ENCODE measurements at regions of chr22 and their contacts with region 1.

Region 1: DNA sequence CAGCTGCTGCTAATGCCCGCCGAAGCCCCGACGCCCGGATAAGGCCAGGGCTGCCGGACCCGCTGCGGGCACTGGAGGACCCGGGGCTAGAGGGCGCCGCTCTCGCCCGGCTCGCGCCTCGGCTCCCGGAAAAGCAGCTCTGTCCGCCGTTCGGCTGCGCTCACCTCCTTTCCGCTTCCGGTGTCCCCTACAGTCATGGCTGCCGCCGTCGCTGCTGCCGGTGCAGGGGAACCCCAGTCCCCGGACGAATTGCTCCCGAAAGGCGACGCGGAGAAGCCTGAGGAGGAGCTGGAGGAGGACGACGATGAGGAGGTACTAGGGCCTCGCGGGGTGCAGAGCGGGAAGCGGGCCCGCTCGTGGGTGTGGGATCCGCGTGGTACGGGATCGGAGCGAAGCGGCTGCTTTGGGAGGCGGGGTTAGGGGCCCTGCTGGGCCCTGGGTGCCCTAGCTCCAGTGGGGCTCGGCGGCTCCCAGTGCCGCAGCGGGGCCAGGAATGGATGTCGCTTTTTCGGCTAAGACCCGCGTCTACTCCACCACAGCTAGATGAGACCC is at the start of gene TOMM22:
- DNase-seq: no peak
- H3K4me3 ChIP-seq: peak within 1 kb of the TSS; percentile 91
- H3K27me3 ChIP-seq: no peaks in the 10 kb centered on the region
- CTCF ChIP-seq: peak; percentile 71
- polyA plus RNA-seq, gene TOMM22: 29.6 and 53.3 TPM in 2 replicates

Region 2: DNA sequence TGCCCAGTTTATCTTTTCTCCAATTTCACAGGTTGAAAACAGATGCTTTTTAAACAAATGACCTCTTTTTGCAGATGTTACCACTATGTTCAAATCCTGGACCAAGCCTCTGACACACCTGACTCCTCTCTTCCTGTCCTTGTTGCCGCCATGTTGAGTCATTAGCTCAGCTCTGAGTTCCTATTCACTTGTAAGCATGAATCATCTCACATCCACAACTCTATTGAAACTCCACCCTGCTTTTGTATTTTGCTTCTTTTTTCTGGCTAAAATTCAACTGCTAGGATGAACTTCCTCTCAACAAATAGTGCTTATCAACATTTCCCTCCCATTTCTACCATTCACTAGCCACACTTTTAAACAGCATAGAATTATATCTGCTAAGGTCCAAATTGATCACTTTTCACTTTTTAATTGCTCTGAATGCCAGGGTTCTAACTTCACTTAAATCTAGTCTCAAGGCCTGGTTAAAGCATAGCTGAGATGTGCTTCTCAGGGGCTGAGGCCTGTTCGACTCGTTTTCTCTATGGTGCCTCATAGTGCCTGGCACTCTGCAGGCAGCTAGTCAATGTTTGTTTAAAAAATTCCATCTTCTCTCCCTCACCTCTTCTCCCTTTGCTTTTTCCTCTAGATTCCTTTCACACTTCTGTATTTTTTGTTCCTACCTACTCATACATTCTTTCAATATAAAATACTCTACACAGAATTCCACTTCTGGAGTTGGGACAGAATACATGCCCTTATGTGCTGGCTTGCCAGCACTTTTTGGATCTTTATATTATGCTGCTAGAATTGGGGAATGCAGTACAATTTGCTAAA is 15.0 kb after region 1 on chr22:
- CTCF ChIA-PET with region 1: interaction called, 18 read pairs
- POLR2A ChIA-PET with region 1: no interaction called
- DNase-seq: peak; percentile 55
- H3K4me3 ChIP-seq: no peak overlapping the region
- H3K27me3 ChIP-seq: no peaks in the 10 kb centered on the region
- CTCF ChIP-seq: no peak

Region 3: GRCh38 chr22:38705235-38706100 is 23.6 kb after region 1 on chr22 and contains the start of gene GTPBP1:
- CTCF ChIA-PET with region 1: interaction called, 14 read pairs
- POLR2A ChIA-PET with region 1: no interaction called
- DNase-seq: peak; percentile 100
- H3K4me3 ChIP-seq: peak within 1 kb of the TSS; percentile 92
- H3K27me3 ChIP-seq: no peaks in the 10 kb centered on the region
- CTCF ChIP-seq: peak; percentile 16; the same call in 1 of the 2 replicates
- polyA plus RNA-seq, gene GTPBP1: 24.0 and 31.1 TPM in 2 replicates

Measured in BJ (cell line).